Left lung (tissue), 14 donors: ENCODE measurements at regions of chr10 and their contacts with region 1.

Region 1: DNA sequence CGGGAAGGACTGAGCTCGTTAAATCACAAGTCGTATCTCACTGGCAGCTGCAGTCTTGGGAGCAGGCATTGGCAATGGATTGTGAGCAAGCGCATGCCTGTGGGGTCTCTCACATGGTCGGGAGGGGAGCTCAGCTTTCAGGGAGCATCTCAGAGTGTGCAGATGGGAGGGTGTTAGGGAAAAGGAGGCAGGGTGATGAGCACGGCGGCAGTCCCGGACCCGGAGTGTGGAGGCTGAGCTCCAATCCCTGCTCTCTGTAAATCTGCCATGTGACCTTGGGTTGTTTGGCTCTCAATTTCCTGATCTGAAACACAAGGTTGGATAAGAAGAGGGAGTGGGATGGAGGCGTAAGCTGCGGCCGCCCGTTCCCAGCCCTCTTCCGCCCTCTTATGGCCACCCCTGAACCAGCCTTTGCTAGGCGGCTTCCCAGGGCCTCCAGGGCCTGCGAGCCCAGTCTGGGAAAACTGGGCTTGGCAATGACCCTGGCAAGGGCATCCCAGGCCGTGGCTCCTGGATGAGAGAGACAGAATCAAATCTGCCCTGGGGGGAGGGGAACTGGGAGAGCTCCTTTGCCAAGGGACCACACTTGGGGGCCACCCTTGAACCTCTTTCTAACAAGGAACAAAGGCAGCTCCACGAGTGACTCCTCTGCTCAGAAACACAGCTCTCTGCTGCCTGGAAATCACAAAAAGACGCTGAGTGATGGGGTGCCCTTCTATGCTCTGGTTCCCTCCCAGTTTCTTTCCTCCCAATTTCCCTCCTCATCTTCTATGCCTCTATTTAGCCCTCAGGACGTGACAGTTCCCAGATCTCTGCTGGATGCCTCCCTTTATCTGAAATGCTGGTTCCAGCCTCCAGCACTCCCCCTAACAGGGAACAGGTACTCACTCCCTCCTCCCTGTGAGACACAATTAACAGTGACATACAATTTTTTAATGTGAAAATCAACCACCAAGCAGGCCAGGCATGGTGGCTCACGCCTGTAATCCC is 41.7 kb upstream of the LOXL4 start:
- DNase-seq: peak; percentile 59 to 86 (median 74)
- ATAC-seq: peak; percentile 97
- H3K4me3 ChIP-seq: no peak overlapping the region
- H3K27ac ChIP-seq: no peak overlapping the region
- H3K4me1 ChIP-seq: peaks cover 3 to 13% of the 10 kb centered on the region in 2 donors
- H3K27me3 ChIP-seq: peaks cover 0 to 14% of the 10 kb centered on the region in 2 donors
- CTCF ChIP-seq: peak; percentile 71 to 72

Region 2: GRCh38 chr10:98246911-98247805 is 62.5 kb before region 1 on chr10:
- intact Hi-C with region 1: loop called in 1 of 2 experiments (anchors 5 kb)
- DNase-seq: peak in 1 of 4 donors; percentile 55
- ATAC-seq: no peak
- H3K4me3 ChIP-seq: no peak overlapping the region
- H3K27ac ChIP-seq: no peak overlapping the region
- H3K4me1 ChIP-seq: no peaks in the 10 kb centered on the region
- H3K27me3 ChIP-seq: no peaks in the 10 kb centered on the region
- CTCF ChIP-seq: no peak